ENCODE measurements at regions of chr7 and their contacts with region 1.

Region 1: GRCh38 chr7:133081599-133082389 is at the start of gene CHCHD3:
- DNase-seq: peak; percentile 96
- H3K4me3 Mint-ChIP-seq: peak within 1 kb of the TSS; percentile 93
- H3K27ac Mint-ChIP-seq: peak within 1 kb of the TSS; percentile 91
- H3K4me1 Mint-ChIP-seq: peaks cover 19% of the 10 kb centered on the region
- H3K27me3 Mint-ChIP-seq: peaks cover 8% of the 10 kb centered on the region
- total RNA-seq, gene CHCHD3: 67.0 and 69.3 TPM in 2 replicates

Region 2: DNA sequence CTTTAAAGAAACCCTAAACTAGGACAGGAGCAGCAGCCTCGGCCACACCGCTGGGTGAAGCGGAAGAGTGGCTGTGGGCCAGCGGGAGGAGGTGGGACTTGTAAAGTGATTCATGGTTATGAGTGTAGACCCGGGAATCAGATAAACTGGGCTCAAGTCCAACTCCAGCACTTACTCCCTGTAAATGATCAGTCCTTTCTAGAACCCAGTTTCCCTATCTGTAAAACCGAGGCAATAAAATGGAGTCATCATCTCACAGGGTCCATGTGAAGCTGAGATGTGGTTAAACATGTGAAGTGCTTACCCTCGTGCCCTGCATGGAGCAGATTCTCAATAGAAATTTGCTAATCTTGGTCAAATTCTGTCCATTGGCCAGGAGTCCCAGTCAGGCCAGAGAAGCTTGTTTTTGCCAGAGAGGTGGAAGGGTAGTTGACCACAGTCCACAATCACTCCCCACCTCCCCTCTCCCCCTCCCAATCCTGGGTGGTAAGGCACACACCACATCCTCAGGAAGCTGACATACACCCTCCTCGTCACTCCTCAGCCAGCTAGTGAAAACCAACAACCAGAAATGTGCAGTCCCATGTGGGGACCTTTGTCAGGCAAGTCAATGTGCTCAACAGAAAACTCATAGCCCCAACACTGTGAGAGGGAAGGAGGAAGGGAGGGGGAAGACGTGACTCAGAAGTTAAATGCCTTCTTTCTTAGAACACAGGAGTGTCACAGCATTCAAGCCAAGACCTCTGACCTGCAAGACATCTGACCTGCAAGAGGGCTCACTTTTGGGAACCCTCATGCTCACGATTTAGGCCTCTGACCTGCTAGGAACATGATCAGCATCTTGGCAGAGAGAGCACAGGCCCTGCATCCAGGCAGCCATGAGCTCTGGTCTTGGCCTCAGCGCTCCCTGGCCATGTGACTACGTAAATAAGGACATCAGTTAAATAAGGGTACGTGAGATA is 650.7 kb before region 1 on chr7:
- intact Hi-C with region 1: loop called (anchors 2 kb)
- DNase-seq: peak; percentile 79
- H3K4me3 Mint-ChIP-seq: no peak overlapping the region
- H3K27ac Mint-ChIP-seq: peak overlapping the region; percentile 65
- H3K4me1 Mint-ChIP-seq: peaks cover 76% of the 10 kb centered on the region
- H3K27me3 Mint-ChIP-seq: no peaks in the 10 kb centered on the region

Region 3: DNA sequence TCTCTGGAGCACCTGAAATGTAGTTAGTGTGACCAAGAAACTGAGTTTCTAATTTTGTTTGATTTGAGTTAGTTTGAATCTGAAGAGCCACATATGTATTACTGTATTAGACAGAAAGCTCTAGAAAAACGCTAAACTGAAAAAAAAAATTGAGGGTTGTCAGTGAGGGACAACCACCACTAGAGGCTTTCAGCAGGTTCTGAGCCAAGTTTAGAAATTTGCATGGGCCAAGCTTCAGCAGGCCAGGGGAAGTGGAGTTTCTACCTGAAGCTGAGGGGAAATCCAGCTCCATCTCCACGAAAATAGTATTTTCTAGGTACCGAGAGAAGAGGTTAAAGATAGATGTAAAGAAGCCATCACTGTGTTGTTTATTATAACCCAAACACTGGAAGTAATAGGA is 427.6 kb before region 1 on chr7:
- intact Hi-C with region 1: loop called (anchors 10 kb)
- DNase-seq: no peak
- H3K4me3 Mint-ChIP-seq: peak overlapping the region; percentile 62
- H3K27ac Mint-ChIP-seq: peak overlapping the region; percentile 64
- H3K4me1 Mint-ChIP-seq: peaks cover 38% of the 10 kb centered on the region
- H3K27me3 Mint-ChIP-seq: no peaks in the 10 kb centered on the region

Region 4: DNA sequence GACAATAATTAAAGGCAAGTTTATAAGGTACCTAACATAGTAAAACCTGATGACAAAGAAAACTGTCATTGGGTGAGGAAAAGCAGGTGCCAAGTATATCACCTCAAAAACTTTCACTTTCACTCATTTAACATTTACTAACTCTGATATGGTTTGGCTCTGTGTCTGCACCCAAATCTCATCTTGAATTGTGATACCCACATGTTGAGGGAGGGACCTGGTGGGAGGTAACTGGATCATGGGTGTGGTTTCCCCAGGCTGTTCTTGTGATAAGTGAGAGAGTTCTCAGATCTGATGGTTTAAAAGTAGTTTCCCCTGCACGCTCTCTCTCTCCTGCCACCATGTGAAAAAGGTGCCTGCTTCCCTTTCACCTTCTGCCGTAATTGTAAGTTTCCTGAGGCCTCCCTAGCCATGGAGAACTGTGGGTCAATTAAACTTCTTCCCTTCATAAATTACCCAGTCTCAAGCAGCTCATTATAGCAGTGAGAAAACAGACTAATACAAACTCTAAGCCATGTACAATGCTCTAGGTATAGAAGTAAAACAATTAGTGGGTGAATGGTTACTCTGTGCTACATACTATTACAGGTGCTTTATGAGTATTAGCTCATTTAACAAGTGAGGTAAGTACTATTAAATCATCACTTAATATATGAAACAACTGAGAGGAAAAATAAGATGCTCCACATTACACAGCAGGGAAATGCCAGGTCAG is 198.9 kb before region 1 on chr7:
- intact Hi-C with region 1: no loop called
- DNase-seq: peak; percentile 24
- H3K4me3 Mint-ChIP-seq: no peak overlapping the region
- H3K27ac Mint-ChIP-seq: no peak overlapping the region
- H3K4me1 Mint-ChIP-seq: peaks cover 24% of the 10 kb centered on the region
- H3K27me3 Mint-ChIP-seq: no peaks in the 10 kb centered on the region

Region 5: DNA sequence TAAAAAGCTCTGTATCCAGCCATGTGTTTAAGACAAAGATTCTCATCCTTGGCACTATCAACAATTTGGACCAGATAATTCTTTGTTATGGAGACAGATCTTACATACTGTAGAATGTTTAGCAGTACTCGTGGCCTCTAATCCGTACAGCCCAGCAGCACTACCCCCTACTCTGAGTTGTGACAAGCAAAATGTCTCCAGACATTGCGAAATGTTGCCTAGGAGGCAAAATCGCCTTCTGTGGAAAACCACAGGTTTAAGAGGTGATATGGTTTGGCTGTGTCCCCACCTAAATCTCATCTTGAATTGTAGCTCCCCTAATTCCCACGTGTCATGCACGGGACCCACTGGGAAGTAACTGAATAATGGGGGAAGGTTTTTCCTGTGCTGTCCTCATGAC is 186.6 kb before region 1 on chr7:
- intact Hi-C with region 1: no loop called
- DNase-seq: no peak
- H3K4me3 Mint-ChIP-seq: no peak overlapping the region
- H3K27ac Mint-ChIP-seq: no peak overlapping the region
- H3K4me1 Mint-ChIP-seq: no peaks in the 10 kb centered on the region
- H3K27me3 Mint-ChIP-seq: no peaks in the 10 kb centered on the region

Region 6: GRCh38 chr7:133252858-133253518 is 171.2 kb after region 1 on chr7 and contains the start of gene EXOC4:
- intact Hi-C with region 1: loop called (anchors 2 kb)
- DNase-seq: peak; percentile 92
- H3K4me3 Mint-ChIP-seq: peak within 1 kb of the TSS; percentile 94
- H3K27ac Mint-ChIP-seq: peak within 1 kb of the TSS; percentile 87
- H3K4me1 Mint-ChIP-seq: peaks cover 22% of the 10 kb centered on the region
- H3K27me3 Mint-ChIP-seq: peaks cover 3% of the 10 kb centered on the region
- total RNA-seq, gene EXOC4: 65.0 and 70.5 TPM in 2 replicates

Region 7: GRCh38 chr7:134126966-134127848 is 1045.4 kb after region 1 on chr7 and contains the start of gene LRGUK:
- intact Hi-C with region 1: loop called (anchors 2 kb)
- DNase-seq: peak; percentile 72
- H3K4me3 Mint-ChIP-seq: peak within 1 kb of the TSS; percentile 83
- H3K27ac Mint-ChIP-seq: no peak within 1 kb of the TSS
- H3K4me1 Mint-ChIP-seq: peaks cover 10% of the 10 kb centered on the region
- H3K27me3 Mint-ChIP-seq: peaks cover 35% of the 10 kb centered on the region
- total RNA-seq, gene LRGUK: 0.11 and 0.16 TPM in 2 replicates

Region 8: GRCh38 chr7:134316539-134317344 is 1234.9 kb after region 1 on chr7 and contains the start of gene SLC35B4:
- intact Hi-C with region 1: loop called (anchors 2 kb)
- DNase-seq: peak; percentile 91
- H3K4me3 Mint-ChIP-seq: peak within 1 kb of the TSS; percentile 88
- H3K27ac Mint-ChIP-seq: peak within 1 kb of the TSS; percentile 81
- H3K4me1 Mint-ChIP-seq: peaks cover 15% of the 10 kb centered on the region
- H3K27me3 Mint-ChIP-seq: peaks cover 8% of the 10 kb centered on the region
- total RNA-seq, gene SLC35B4: 22.8 and 23.1 TPM in 2 replicates